Sigmoid colon (tissue), 7 donors: ENCODE measurements at regions of chr19 and their contacts with region 1.

Region 1: DNA sequence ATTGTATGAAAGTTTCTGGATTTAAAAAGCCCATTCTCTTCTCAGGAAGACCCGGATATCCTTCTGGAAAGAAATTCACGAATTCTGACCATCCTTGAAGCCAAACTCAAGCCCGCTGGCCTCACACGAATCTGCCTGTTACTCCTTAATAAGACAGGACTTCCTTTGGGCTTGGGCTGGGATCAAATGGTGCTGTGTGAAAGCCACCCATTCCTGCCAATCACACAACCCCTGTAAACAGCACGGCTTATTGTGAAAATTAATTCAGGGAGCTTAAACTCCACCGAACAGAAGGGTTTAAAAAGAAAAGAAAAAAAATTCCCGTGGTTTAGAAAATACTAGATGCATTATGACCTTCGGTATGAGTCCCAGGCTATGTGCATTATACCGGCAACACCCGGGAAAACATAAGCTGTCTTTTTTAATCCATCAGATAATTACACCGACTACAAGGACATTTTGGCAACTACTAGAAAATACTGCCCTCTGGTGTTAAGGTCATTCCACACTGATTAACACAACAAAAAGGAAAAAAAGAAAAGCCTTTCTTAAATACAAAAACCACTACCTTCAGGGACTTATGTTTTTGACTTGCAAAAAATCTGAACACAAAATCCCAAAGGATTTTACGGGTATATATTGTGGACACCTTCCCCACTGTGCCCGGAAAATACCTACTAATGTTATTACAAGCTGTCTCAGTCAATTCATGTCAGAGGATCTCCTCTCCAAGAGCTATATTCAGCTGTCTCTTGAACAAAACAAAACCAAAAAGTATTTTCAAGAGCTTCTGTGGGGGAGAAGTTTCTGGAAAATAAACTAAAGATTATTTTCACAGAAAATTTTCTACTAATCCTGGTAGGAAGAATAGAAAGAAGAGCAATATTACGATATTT is 76.0 kb upstream of the LSM14A start:
- DNase-seq: no peak
- H3K4me3 ChIP-seq: no peak overlapping the region
- H3K27ac ChIP-seq: no peak overlapping the region
- H3K4me1 ChIP-seq: no peaks in the 10 kb centered on the region
- H3K27me3 ChIP-seq: no peaks in the 10 kb centered on the region
- CTCF ChIP-seq: peak; percentile 52 to 64 (median 57)
- EP300 ChIP-seq: no peak
- POLR2A ChIP-seq: no peak

Region 2: DNA sequence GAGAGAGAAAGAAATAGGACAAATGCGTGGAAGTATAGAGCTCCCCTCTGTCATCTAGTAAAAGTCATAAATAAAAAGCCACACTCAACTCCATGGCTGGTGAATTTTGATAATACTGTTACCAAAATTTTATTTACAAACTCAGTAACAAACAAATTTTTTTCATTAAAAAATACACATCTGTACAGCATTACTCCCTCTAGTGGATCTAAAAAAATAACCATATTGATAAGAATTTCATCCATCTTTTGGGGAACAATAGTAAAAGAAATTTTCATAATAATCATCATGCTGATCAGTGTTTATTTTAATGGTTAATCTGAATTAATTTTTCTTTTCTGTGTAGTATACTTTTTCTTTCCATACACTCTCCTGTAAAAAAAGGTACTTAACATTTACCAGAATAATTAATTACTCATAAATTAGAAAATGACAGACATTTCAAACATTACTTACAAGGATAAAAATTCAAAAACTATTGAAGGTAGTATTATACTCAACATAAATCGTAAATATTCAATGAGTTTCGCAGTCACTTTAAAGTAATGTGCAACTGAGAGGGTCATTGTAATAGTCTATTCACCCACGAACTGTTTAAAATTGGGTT is 97.4 kb before region 1 on chr19:
- intact Hi-C with region 1: loop called (anchors 2 kb)
- DNase-seq: no peak
- H3K4me3 ChIP-seq: no peak overlapping the region
- H3K27ac ChIP-seq: no peak overlapping the region
- H3K4me1 ChIP-seq: no peaks in the 10 kb centered on the region
- H3K27me3 ChIP-seq: no peaks in the 10 kb centered on the region
- CTCF ChIP-seq: peak in 2 of 4 experiments; percentile 22 to 39
- EP300 ChIP-seq: no peak
- POLR2A ChIP-seq: no peak